ENCODE measurements at regions of chr16 and their contacts with region 1.

Region 1: DNA sequence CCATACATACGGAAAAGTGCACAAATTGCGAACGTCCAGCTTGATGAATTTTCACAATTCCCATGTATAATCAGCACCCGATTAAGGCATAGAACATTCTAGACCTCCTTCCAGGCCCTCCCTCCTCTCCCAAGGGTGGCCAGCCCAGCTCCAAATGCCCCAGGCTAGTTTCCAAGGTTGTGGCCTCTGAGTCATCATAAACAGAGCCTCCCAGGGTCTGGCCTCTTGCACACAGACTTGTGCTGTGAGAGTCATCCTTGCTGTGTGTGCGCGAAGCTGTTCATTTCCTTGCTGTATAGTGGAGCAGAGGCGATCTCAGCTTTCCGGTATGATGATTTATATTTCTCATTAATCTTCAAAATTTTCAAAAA is 20.5 kb upstream of the JPH3 start:
- ATAC-seq: peak; percentile 87 to 94 (median 92)
- H3K4me3 ChIP-seq: no peak overlapping the region
- H3K27ac ChIP-seq: peak overlapping the region; percentile 3 to 61
- H3K4me1 ChIP-seq: peaks cover 8 to 16% of the 10 kb centered on the region in 2 donors

Region 2: GRCh38 chr16:87765776-87766484 is 184.1 kb after region 1 on chr16 and contains the start of gene KLHDC4:
- in situ Hi-C with region 1: loop called in 3 of 9 experiments (anchors 25 kb)
- ATAC-seq: peak; percentile 87 to 94 (median 92)
- H3K4me3 ChIP-seq: peak within 1 kb of the TSS; percentile 78 to 96 (median 82)
- H3K27ac ChIP-seq: peak within 1 kb of the TSS; percentile 77 to 81
- H3K4me1 ChIP-seq: peaks cover 6 to 7% of the 10 kb centered on the region in 2 donors
- total RNA-seq, gene KLHDC4: 18.1 to 49.7 (median 22.4) TPM

Region 3: DNA sequence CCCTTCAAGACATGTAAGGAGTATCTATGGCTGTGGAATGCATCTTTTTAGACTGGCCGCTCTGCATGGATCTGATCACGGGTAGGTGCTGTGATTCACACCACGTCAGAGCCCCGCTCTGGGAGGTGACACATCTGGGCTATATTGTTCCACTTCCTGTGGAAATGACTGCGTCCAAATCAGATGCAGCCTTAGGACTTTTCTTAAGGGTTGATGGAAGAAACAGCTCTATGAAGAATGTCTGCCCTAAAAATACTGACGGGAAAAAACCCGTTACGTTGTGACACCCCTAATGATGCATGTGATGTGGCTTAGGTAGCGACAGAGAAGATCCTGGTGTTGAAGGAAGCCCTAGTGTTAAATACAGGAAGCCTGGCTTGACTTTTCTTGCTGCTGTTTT is 381.6 kb after region 1 on chr16:
- in situ Hi-C with region 1: no loop called
- ATAC-seq: peak in 5 of 8 experiments; percentile 38 to 86 (median 74)
- H3K4me3 ChIP-seq: no peak overlapping the region
- H3K27ac ChIP-seq: no peak overlapping the region
- H3K4me1 ChIP-seq: peaks cover 0 to 11% of the 10 kb centered on the region in 2 donors